Activated T-helper 1 cell treated with anti-CD3 and anti-CD28 coated beads, Interleukin-12 subunit alpha, Interleukin-12 subunit beta, Interleukin-2, Interleukin-4 antibody, amounts not matched to agents 30 ng/mL and 10 ng/mL and 1 ng/mL, durations not matched to agents 14 hours and 24 hours and 36 hours (primary cell): ENCODE measurements at regions of chr2 and their contacts with region 1.

Region 1: DNA sequence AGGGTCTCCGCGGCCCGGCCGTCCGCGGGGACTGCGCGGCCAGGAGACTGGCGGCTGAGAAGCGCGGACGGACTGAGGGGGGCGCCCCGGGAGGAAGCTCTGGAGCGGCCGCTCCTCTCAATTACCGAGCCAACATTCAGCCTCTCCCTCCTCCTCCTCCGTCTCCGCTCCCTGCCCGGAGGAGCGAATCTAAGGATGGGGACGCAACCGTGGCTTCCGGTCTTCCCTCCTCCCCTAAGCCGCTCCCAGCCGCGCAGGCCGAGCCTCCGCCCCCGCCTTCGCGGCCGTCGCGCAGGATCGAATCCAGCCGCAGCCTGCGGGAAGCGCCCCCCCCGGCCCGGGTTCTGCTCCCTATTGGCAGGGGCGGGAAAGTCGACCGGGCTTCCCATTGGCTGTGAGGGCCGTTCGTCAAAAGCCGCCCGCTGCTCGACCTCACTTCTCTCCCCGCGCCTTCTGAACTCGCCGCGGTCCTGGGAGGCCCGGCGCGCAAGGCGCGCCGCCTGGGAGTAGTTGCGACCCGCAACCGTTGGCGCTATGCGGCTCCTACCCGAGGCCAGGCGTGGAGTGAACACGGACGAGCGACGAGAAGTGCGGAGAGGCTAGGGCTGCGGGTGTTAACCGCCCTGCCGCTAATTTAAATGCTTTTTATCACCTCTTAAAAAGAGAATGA is at the start of gene HNRNPLL:
- DNase-seq: peak; percentile 94
- H3K4me3 Mint-ChIP-seq: peak within 1 kb of the TSS; percentile 91
- H3K27ac Mint-ChIP-seq: peak within 1 kb of the TSS; percentile 92
- H3K4me1 Mint-ChIP-seq: peaks cover 54% of the 10 kb centered on the region
- H3K27me3 Mint-ChIP-seq: no peaks in the 10 kb centered on the region
- total RNA-seq, gene HNRNPLL: 85.8 and 91.5 TPM in 2 replicates

Region 2: GRCh38 chr2:38581193-38582147 is 21.4 kb before region 1 on chr2:
- intact Hi-C with region 1: loop called (anchors 1 kb)
- DNase-seq: peak; percentile 9
- H3K4me3 Mint-ChIP-seq: no peak overlapping the region
- H3K27ac Mint-ChIP-seq: peak overlapping the region; percentile 75
- H3K4me1 Mint-ChIP-seq: peaks cover 28% of the 10 kb centered on the region
- H3K27me3 Mint-ChIP-seq: no peaks in the 10 kb centered on the region

Region 3: DNA sequence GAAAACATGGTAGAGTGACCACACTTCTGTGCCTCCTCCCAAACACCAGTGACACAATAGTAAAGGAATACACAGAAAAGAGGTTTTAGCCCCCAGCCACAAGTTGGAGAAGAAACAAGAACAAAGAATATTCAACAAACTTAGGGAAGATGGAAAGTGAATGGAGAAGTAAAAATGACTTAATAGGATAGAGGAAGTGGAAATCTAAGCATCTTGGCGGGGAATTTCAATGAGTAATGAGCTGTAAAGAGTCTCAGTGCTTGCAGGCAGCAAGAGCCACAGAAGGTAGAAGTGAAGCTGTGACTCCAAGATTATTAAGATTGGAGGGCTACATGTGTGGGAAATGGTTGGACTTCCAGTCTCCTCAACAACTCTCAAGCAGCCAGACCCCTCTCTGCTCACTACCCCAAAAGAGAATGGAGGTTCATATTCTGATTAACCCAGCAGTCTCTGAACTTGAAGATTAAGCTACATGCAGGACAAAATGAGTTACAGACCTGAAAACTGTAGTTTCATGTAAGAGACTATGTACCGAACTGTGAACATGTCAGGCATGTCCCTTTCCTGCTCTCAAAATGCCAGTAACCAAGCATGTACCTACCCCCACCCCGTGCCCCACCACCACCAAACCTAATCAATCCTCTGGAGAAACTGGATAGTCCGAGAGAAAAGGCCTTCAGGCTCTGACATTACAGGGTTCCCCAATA is 16.7 kb after region 1 on chr2:
- intact Hi-C with region 1: loop called (anchors 1 kb)
- DNase-seq: no peak
- H3K4me3 Mint-ChIP-seq: no peak overlapping the region
- H3K27ac Mint-ChIP-seq: no peak overlapping the region
- H3K4me1 Mint-ChIP-seq: peaks cover 31% of the 10 kb centered on the region
- H3K27me3 Mint-ChIP-seq: peaks cover 2% of the 10 kb centered on the region

Region 4: GRCh38 chr2:38665854-38666555 is 63.1 kb after region 1 on chr2 and contains the start of gene GALM:
- intact Hi-C with region 1: loop called (anchors 1 kb)
- DNase-seq: peak; percentile 54
- H3K4me3 Mint-ChIP-seq: peak within 1 kb of the TSS; percentile 93
- H3K27ac Mint-ChIP-seq: peak within 1 kb of the TSS; percentile 94
- H3K4me1 Mint-ChIP-seq: peaks cover 69% of the 10 kb centered on the region
- H3K27me3 Mint-ChIP-seq: no peaks in the 10 kb centered on the region
- total RNA-seq, gene GALM: 77.0 and 78.4 TPM in 2 replicates

Region 5: DNA sequence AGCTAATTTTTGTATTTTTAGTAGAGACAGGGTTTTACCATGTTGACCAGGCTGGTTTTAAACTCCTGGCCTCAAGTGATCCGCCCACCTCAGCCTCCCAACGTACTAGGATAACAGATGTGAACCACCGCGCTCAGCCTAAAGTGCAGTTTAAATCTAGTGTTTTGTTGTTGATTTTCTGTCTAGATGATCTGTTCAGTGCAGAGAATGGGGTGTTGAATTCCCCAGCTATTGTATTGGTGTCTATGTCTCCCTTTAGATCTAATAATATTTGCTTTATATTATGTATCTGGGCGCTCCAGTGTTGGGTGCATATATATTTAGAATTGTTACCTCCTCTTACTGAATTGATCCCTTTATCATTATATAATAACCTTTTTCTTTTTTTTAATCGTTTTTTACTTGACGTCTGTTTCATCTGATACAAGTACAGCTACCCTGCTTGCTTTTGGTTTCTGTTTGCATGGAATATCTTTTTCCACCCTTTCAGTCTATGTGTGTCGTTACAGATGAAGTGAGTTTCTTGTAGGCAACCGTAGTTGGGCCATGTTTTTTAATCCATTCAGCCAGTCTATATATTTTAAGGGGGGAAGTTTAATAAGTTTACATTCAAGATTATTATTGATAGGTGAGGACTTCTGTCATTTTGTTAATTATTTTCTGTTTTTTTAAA is 97.4 kb after region 1 on chr2:
- intact Hi-C with region 1: loop called (anchors 1 kb)
- DNase-seq: no peak
- H3K4me3 Mint-ChIP-seq: peak overlapping the region; percentile 62
- H3K27ac Mint-ChIP-seq: peak overlapping the region; percentile 93
- H3K4me1 Mint-ChIP-seq: peaks cover 53% of the 10 kb centered on the region
- H3K27me3 Mint-ChIP-seq: no peaks in the 10 kb centered on the region

Region 6: GRCh38 chr2:38720613-38721241 is 117.9 kb after region 1 on chr2:
- intact Hi-C with region 1: loop called (anchors 1 kb)
- DNase-seq: no peak
- H3K4me3 Mint-ChIP-seq: peak overlapping the region; percentile 40
- H3K27ac Mint-ChIP-seq: peak overlapping the region; percentile 87
- H3K4me1 Mint-ChIP-seq: peaks cover 59% of the 10 kb centered on the region
- H3K27me3 Mint-ChIP-seq: no peaks in the 10 kb centered on the region

Region 7: DNA sequence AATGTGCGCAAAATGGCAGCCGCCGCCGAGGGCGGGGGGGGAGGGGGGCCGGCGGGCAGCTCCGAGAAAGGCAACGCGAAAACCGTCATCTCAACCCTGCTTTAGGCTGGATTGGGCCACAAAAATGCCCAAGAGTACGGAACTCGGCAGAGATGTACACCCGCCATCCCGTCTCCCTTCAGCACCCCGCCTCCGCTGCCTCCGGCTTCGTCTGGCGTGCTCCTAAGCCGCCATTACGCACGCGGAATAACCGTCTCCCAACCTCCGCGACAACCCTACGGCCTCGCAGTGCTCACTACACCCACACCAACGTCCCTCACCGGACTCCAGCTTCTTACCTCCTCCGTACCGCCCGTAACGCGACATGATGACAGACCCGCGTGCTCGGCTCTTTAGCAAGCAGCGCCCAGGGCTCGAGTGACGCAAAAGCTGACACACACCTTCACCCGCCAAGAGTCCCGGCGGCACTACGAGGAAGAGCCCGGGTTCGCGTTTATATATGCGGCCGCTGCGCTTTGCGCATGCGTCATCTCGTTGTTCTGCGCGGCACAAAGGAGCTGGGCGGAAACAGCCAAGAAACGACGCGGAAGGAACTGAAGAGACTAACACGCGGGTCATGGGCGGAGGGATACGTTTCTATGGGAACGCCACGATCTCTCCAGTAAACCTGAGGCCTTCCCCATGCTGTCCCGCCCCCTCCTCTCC is 148.2 kb after region 1 on chr2 and contains the start of gene SRSF7:
- intact Hi-C with region 1: loop called (anchors 1 kb)
- DNase-seq: peak; percentile 96
- H3K4me3 Mint-ChIP-seq: peak within 1 kb of the TSS; percentile 98
- H3K27ac Mint-ChIP-seq: peak within 1 kb of the TSS; percentile 100
- H3K4me1 Mint-ChIP-seq: peaks cover 54% of the 10 kb centered on the region
- H3K27me3 Mint-ChIP-seq: no peaks in the 10 kb centered on the region
- total RNA-seq, gene SRSF7: 417 and 422 TPM in 2 replicates